Heart right ventricle (tissue), 16 donors: ENCODE measurements at regions of chr1 and their contacts with region 1.

Region 1: DNA sequence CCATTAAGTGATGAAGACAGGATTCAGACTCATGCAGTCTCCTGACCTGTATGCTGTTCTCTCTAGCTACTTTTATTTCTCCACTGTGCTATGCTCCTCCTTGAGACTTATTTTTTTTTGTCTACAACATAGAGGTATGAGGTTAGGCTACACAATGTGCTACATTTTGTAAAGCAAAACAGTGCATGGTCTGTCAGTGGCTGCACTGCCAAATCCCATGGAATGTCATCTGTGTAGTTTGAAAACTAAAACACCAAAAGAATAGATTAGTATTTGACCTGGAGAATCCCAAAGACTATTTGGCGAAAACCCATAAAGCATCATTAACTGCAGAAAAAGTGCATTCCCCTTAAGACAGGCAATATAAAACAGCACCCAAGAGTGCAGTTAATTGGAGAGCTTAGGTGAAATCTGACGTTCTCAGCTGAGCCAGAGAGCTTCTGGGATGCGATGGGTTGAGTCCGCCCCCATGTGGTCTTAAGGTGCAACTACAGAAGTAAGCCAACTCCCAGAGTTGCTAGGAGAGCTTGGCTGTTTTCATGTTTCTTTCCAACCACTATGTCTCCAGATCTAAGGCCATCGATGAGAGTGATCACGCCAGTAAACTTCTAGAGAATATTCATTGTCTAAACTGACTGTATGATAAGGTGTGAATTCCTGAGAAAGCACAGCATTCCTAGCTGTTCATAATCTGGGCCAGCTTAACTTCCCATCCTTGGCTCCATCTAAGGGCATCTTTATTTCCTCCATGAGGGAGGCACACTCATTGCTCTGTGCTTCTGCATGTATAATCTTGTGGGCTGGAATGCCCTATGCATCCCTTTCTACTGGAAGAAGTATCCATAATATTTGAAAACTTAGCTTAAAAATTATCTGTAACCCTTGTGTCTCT is 20.7 kb upstream of the CYP2J2 start:
- DNase-seq: peak in 1 of 2 donors; percentile 45
- ATAC-seq: peak; percentile 69 to 93 (median 88)
- H3K4me3 ChIP-seq: no peak overlapping the region
- H3K27ac ChIP-seq: no peak overlapping the region
- H3K4me1 ChIP-seq: peaks cover 0 to 4% (median 0%) of the 10 kb centered on the region in 9 donors
- H3K27me3 ChIP-seq: no peaks in the 10 kb centered on the region
- CTCF ChIP-seq: peak; percentile 77 to 92 (median 90)

Region 2: DNA sequence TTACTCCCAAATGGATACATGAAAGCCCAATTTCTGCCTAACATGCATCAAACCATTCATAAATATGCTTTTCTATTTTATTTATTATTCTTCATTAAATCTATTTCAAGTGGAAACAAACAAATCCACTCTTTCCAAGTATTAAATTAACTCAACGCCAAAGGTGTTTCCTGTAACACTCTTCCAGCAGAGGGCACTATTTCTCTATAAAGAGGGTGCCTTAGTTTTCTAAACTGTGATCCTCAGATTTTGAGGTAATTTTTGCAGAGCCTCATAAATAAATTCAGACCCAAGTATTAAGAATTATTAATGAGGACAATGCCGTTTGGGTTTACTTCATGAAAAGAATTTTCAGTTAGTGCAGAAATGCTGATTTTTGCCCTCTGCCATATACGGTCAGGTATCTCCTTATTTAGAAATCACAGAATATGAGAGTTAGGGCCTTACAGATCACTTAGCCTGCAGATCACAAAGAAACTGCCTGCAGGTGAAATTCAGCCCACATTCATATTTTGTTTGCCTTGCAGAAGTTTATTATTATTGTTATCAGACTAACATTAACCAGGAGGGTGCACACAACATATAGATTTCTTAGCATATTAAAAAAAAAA is 1207.3 kb before region 1 on chr1:
- intact Hi-C with region 1: loop called in 1 of 10 experiments (anchors 10 kb)
- DNase-seq: peak in 1 of 2 donors; percentile 52
- ATAC-seq: peak in 6 of 8 donors; percentile 49 to 76 (median 64)
- H3K4me3 ChIP-seq: no peak overlapping the region
- H3K27ac ChIP-seq: no peak overlapping the region
- H3K4me1 ChIP-seq: peaks cover 0 to 24% (median 3%) of the 10 kb centered on the region in 9 donors
- H3K27me3 ChIP-seq: no peaks in the 10 kb centered on the region
- CTCF ChIP-seq: peak; percentile 73 to 95 (median 86)

Region 3: DNA sequence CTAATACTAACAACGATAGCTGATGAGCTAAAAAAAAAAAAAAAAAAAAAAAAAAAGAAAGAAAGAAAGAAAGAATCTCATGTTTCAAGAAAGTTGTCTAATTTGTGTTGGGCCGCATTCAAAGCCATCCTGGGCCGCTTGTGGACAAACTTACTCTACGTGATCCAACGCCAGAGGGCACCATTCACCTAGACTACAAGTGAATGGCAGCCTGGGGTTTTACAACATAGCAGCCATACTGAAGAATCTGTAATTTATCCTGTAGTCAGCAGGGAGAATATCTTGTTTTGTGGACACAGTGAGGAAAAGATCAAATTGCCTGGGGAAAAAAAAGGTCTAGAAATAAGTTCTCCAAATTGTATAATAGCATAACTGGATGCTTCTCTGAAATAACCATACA is 67.7 kb before region 1 on chr1:
- intact Hi-C with region 1: loop called (anchors 1 to 5 kb)
- DNase-seq: peak; percentile 34 to 58
- ATAC-seq: peak; percentile 76 to 93 (median 84)
- H3K4me3 ChIP-seq: no peak overlapping the region
- H3K27ac ChIP-seq: no peak overlapping the region
- H3K4me1 ChIP-seq: peaks cover 0 to 11% (median 0%) of the 10 kb centered on the region in 9 donors
- H3K27me3 ChIP-seq: no peaks in the 10 kb centered on the region
- CTCF ChIP-seq: peak in 8 of 9 donors; percentile 24 to 65 (median 56)

Region 4: DNA sequence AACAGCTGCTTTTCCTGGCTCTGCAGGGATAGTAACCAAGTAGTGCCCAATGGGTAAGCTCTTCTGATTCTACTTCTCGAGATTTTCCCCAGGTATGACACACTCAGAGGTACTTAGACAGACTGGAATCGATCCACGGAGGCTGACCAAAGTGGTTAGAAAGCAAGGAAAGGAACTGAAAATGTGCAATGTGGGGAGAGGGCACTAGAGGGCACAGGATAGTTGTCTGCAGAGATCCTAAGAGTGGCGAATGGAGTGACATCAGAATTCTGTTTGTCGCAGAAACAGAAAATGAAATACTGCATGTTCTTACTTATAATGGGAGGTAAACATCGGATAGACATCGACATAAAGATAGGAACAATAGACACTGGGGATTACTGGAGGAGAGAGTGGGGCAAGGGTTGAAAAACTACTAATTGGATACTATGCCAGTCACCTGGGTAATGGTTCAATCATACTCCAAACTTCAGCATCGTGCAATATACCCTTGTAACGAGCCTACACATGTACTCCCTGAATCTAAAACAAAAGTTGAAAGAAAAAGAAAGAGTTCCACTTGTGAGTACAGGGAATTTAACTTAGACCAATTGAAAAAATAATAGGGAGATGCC is 44.0 kb before region 1 on chr1:
- intact Hi-C with region 1: loop called in 1 of 10 experiments (anchors 5 kb)
- DNase-seq: no peak
- ATAC-seq: peak in 3 of 8 donors; percentile 41
- H3K4me3 ChIP-seq: no peak overlapping the region
- H3K27ac ChIP-seq: peak overlapping the region in 3 of 10 donors; percentile 39 to 56 (median 53)
- H3K4me1 ChIP-seq: peaks cover 0 to 58% (median 12%) of the 10 kb centered on the region in 9 donors
- H3K27me3 ChIP-seq: peaks cover 0 to 2% (median 0%) of the 10 kb centered on the region in 7 donors
- CTCF ChIP-seq: peak in 6 of 9 donors; percentile 16 to 43 (median 34)

Region 5: GRCh38 chr1:60008500-60008899 is 61.2 kb after region 1 on chr1:
- intact Hi-C with region 1: no loop called
- DNase-seq: no peak
- ATAC-seq: no peak
- H3K4me3 ChIP-seq: no peak overlapping the region
- H3K27ac ChIP-seq: no peak overlapping the region
- H3K4me1 ChIP-seq: no peaks in the 10 kb centered on the region
- H3K27me3 ChIP-seq: no peaks in the 10 kb centered on the region
- CTCF ChIP-seq: no peak